Esophagus muscularis mucosa (tissue), 4 donors: ENCODE measurements at regions of chr5 and their contacts with region 1.

Region 1: GRCh38 chr5:148826053-148826738 is at the start of gene ADRB2:
- DNase-seq: peak; percentile 98
- H3K4me3 ChIP-seq: peak within 1 kb of the TSS; percentile 60 to 66 (median 63)
- H3K27ac ChIP-seq: peak within 1 kb of the TSS; percentile 77 to 86 (median 80)
- H3K4me1 ChIP-seq: peaks cover 12 to 43% (median 35%) of the 10 kb centered on the region in 4 donors
- H3K27me3 ChIP-seq: no peaks in the 10 kb centered on the region
- CTCF ChIP-seq: no peak
- EP300 ChIP-seq: no peak
- POLR2A ChIP-seq: peak; percentile 92
- total RNA-seq, gene ADRB2: 4.2 to 6.1 (median 4.9) TPM

Region 2: DNA sequence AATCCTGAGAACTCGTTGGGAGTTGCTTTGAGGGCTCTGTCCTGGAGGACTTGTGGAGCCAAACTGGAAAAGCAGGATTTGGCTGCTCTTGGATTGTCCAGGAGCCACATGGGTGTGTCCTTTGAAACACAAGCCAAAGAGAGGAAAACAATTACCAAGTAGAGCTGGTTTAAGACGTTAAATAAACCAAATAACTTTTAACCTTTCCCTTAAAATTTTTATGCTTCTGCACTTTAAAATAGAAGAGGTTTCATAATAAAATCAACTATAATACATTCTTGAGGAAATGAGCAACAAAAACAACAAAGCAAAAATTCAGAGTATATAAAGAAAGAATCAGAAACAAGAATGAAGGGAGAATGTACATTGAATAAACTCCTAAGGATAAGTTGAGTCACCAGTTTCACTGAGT is 933.4 kb before region 1 on chr5:
- intact Hi-C with region 1: no loop called
- DNase-seq: no peak
- H3K4me3 ChIP-seq: no peak overlapping the region
- H3K27ac ChIP-seq: no peak overlapping the region
- H3K4me1 ChIP-seq: no peaks in the 10 kb centered on the region
- H3K27me3 ChIP-seq: peaks cover 0 to 5% (median 0%) of the 10 kb centered on the region in 4 donors
- CTCF ChIP-seq: no peak
- EP300 ChIP-seq: no peak
- POLR2A ChIP-seq: no peak

Region 3: DNA sequence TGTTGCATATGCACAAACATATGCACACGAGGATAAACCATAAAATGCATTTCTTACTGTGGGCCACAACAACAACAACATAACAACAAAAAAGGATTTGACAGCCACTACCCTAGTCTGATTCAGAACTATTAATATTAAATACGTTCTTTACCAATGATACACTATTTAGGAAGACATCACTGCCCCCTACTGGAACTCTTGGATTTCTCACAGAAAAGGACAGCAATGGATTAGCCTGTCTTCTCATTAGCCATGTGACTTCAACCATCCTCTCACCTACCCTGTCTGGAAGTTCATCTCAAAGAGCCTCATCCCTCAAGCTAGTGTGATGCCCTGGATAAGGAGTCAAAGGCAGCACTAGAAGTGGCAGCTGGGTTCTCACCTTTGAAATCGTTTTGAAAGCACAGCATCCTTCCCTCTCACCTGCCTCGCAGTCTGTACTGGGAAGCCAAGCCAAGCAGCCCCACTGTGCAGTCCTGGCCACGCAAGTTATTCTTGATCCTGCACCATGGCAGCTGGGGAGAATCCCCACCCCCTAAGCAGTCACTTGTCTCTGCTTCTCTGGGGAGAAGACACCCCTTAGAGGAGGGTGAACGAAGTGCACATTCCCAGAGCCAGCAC is 172.1 kb after region 1 on chr5:
- intact Hi-C with region 1: loop called (anchors 5 kb)
- DNase-seq: peak; percentile 39
- H3K4me3 ChIP-seq: no peak overlapping the region
- H3K27ac ChIP-seq: no peak overlapping the region
- H3K4me1 ChIP-seq: peaks cover 0 to 21% (median 9%) of the 10 kb centered on the region in 4 donors
- H3K27me3 ChIP-seq: no peaks in the 10 kb centered on the region
- CTCF ChIP-seq: peak; percentile 50 to 66 (median 54)
- EP300 ChIP-seq: no peak
- POLR2A ChIP-seq: no peak